AG04449 (cell line): ENCODE measurements at regions of chr15 and their contacts with region 1.

Region 1: GRCh38 chr15:45118131-45118588 is 4.0 kb downstream of the DUOXA2 start:
- DNase-seq: peak; percentile 44
- H3K4me3 ChIP-seq: peak overlapping the region; percentile 18; the same call in 1 of the 2 replicates
- CTCF ChIP-seq: peak; percentile 100

Region 2: DNA sequence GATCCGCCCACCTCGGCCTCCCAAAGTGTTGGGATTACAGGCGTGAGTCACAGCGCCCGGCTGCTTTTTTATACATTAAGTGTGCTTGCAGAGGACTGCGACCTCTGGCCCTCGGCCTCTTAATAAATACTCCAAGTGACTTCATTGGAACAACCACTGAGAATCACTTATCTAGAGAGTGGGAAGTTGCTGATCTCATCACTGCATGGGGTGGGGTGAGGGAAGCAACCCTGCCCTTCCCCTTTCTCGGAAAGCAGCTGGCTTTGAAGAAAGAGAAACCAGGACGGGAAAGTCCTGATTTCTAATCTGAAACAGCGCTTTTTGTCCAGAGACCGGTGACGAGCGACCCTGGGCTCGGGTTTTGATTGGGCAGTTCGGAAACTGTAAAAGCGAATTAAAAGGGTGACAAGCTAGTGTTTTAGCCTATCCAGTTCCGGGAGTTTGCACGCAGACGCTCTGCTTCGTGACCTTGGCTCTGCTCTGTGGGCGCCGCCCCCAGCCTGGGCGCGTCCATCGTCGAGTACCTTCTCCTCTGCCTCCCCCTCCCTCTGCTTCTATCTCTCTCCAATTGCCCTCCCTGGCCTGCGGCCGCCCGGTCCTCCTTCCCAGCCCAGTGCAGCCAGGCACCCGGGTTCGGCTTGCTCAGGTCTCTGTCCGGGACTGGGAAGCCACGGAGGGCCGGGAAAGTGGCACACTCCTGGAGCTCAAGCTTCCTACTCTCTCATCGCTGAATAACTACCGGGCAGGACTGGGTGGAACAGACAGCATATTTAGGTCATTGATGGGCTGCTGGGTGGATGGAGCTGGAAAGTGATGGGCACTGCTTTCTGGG is 389.4 kb before region 1 on chr15:
- CTCF ChIA-PET with region 1: no interaction called
- POLR2A ChIA-PET with region 1: no interaction called
- DNase-seq: peak; percentile 91
- H3K4me3 ChIP-seq: peak overlapping the region; percentile 83
- CTCF ChIP-seq: no peak

Region 3: GRCh38 chr15:45100884-45101622 is 17.1 kb before region 1 on chr15:
- CTCF ChIA-PET with region 1: interaction called, 39 read pairs
- POLR2A ChIA-PET with region 1: no interaction called
- DNase-seq: no peak
- H3K4me3 ChIP-seq: no peak overlapping the region
- CTCF ChIP-seq: no peak

Region 4: DNA sequence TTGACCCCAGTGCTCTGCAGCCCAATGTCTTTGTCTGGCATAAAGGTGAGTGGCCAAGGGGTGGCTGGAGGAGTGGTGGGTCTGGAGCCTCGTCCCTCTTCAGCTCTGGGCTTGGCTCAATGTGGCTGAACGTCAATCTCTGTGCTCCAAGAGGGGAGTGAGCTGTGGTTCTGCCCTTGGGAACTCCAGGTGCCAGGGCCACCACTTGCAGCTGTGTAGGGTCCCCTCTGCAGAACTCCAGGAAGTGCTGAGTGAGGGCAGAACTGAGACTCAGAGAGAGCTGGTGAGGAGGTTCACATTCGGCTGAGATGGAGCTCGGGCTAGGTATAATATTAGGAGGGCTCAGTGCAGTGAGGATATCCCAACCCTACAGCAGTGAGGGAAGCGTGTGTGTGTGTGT is 23.2 kb after region 1 on chr15:
- CTCF ChIA-PET with region 1: interaction called, 129 read pairs
- POLR2A ChIA-PET with region 1: no interaction called
- DNase-seq: no peak
- H3K4me3 ChIP-seq: no peak overlapping the region
- CTCF ChIP-seq: no peak

Region 5: DNA sequence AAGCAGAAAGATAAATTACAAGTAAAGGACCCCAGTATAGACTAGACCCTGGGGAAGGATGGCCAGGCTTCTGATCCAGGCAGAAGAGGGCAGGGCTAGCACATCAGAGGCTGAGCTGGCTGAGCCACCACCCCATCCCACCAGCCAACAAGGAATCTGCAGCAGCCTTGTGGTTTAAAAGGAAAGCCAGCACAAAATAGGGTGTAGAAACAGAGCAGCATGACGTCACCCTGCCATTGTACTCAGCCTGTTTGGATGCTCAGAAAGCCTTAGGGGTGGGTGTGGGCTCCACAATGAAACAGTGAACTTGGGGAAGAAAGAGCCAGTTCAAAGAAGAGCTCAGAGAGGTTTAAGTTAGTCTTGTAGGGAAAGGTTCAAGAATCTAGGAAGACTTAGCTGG is 39.8 kb after region 1 on chr15:
- CTCF ChIA-PET with region 1: interaction called, 21 read pairs
- POLR2A ChIA-PET with region 1: interaction called, 3 read pairs
- DNase-seq: peak; percentile 37
- H3K4me3 ChIP-seq: no peak overlapping the region
- CTCF ChIP-seq: no peak

Region 6: DNA sequence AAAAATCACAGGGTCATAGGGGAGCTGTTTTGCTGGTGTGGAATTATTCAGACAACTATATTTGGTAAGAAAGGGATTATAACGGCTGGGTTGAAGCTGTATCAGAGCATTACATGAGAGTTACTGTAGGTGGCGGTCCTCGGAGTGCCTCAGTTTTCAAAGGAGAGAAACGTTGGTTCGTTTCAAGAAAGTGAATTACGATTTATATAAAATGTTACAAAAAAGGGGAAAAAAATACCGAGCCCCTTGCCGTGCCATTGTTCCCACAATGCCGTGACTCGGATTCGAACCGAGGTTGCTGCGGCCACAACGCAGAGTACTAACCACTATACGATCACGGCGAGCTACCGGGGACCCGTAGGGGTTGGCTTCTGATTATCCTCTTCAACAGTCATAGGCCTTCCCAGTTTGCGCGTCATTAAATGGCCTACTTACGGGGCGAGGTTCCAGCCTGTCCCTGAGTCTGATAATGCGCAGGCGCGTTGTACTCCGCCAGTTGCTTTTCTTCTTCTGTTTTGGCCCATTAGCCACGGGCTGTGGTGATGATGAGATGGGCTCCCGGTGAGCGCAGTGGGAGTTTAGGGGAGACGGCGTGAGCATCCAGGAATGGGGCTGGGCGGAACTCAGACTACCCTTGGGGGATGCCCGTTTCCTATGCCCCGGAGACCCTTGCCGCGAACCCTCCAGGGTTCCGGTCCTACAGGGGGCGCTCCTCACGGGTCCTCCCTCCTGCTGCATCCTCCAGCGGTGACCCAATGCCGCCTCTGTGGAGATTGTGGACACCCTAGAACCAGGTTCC is 80.4 kb after region 1 on chr15:
- CTCF ChIA-PET with region 1: interaction called, 11 read pairs
- POLR2A ChIA-PET with region 1: no interaction called
- DNase-seq: peak; percentile 87
- H3K4me3 ChIP-seq: peak overlapping the region; percentile 92
- CTCF ChIP-seq: peak; percentile 87

Region 7: DNA sequence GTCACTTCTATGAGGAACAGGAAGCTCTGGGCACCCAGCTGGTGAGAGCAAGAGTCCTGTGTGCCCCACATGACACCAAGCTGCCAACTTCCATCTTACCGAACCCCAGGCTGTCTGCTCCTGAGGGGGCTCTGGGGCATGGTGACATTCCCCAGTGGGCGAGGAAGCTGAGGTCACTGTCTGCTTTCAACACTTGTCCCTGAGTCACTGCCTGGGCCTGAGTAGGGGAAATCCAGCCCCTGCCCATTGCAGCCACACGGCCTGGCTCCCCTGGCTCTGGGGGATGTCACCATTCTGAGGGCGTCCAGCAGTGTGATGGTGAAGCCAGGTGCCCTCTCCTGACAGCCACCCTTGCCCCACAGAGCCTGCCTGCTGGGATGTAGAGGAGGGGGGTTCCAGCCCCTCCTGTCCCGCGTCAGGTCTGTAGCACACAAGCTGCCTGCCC is 329.9 kb after region 1 on chr15:
- CTCF ChIA-PET with region 1: no interaction called
- POLR2A ChIA-PET with region 1: no interaction called
- DNase-seq: no peak
- H3K4me3 ChIP-seq: no peak overlapping the region
- CTCF ChIP-seq: no peak